ENCODE measurements at regions of chr16 and their contacts with region 1.

Region 1: DNA sequence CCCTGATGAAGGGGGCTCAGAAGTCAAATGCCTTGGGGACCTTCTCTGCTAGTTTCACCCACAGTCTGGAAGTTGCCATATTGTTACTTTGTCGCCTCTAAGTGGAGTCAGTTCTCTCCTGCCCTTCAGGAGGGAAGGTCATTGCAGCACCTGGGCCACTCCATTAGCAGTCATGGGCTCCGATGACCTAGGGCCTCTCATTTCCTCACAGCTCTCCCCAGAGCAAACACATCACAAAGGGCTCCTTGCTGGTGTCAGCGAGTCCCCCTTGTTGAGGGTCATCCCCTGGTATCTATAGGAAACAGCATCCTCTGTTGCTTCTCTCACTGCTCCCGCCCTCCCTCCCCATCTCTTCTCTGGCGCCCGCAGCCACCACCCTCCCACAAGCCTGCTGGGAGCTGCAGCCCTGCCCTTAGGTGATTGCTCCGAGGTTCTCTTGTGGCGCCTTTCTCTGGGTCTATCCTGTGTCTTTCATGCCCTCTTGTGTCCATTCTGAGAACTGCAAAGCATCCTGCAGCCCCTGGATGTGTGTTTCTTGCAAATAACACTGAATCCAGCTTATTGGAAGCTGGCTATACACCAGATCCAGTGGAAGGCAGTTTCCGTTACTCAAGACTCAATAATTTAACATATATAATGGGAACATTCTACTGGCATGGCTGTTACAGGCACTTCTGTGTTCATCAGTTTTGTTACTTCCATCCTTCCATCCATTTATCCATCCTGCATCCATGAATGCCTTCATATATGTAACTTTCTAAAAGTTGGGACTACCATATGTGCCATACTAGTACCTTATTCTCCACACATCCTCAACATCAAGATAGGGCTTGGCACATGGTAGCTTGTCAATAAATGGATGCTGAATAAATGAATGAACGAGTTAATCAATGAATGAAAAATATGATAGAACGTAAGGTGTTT is 21.2 kb downstream of the PDILT start:
- DNase-seq: peak; percentile 74
- H3K4me3 ChIP-seq: no peak overlapping the region
- H3K27ac ChIP-seq: no peak overlapping the region
- H3K4me1 ChIP-seq: no peaks in the 10 kb centered on the region
- H3K27me3 ChIP-seq: peaks cover 7% of the 10 kb centered on the region
- CTCF ChIP-seq: peak; percentile 79

Region 2: DNA sequence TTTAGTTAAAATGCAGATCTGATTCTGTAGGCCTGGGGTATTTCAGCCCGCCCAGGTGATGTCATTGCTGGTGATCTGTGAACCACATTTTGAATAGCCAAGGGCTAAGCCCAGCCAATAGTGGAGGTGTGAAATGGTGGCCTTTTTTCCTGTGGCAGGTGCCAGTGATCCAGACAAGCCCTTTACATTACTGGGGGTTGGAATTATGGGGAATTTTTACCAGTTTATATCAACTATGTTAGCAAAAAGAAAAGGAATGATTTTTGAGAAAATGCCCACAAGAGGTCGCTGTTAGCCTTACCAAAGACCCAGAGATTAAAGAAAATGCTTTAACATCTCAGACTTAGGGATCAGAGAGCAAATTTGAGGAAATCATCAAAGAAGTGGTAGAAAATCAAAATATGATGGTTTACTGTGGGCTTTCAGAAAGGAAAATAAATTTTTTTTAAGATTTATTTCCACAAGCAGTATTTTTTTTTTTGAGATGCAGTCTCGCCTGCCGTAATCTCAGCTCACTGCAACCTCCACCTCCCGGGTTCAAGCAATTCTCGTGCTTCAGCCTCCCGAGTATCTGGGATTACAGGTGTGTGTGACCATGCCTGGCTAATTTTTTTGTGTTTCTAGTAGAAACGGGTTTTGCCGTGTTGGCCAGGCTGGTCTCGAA is 824.0 kb before region 1 on chr16:
- CTCF ChIA-PET with region 1: no interaction called
- POLR2A ChIA-PET with region 1: no interaction called
- intact Hi-C with region 1: loop called (anchors 10 kb)
- DNase-seq: peak; percentile 69
- H3K4me3 ChIP-seq: no peak overlapping the region
- H3K27ac ChIP-seq: no peak overlapping the region
- H3K4me1 ChIP-seq: no peaks in the 10 kb centered on the region
- H3K27me3 ChIP-seq: no peaks in the 10 kb centered on the region
- CTCF ChIP-seq: peak; percentile 80

Region 3: DNA sequence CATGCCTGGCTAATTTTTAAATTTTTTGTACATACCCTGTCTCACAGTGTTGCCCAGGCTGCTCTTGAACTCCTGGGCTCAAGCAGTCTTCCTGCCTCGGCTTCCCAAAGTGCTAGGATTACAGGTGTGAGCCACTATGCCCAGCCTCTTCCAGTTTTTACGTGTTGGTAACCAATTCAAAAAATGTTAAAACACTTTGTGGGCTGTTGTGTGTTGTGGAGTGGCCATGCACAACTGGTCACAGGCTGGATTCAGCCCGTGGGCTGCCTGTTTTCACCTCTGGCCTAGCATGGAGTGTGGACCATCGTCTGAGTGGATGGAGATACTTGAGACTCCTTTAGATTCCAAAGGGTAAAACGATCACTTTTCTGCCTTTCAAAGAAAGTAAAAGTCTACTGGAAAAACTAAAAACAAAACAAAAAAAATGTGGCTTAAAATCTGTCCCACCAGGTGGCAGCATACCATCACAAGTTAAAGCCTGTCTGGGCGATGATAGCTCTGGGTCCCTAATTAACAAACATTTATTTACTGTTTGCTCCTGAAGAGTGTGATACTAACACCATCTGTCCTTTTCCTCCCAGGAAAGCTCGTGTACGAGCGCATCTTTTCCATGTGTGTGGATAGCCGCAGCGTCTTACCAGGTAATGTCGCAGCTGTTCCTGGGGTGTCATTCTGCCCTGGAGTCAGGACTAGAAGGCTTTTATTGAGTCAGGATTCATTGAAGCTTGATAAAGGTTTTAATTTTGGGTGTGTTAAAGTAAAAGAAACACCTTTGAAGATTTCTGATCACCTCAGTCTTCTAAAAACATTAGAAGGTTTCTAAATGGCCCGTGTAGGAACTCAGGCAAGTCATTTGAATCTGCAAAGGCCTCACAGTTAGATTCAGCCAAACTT is 782.0 kb before region 1 on chr16:
- CTCF ChIA-PET with region 1: no interaction called
- POLR2A ChIA-PET with region 1: no interaction called
- intact Hi-C with region 1: loop called (anchors 10 kb)
- DNase-seq: peak; percentile 44
- H3K4me3 ChIP-seq: no peak overlapping the region
- H3K27ac ChIP-seq: no peak overlapping the region
- H3K4me1 ChIP-seq: no peaks in the 10 kb centered on the region
- H3K27me3 ChIP-seq: no peaks in the 10 kb centered on the region
- CTCF ChIP-seq: peak; percentile 72

Region 4: DNA sequence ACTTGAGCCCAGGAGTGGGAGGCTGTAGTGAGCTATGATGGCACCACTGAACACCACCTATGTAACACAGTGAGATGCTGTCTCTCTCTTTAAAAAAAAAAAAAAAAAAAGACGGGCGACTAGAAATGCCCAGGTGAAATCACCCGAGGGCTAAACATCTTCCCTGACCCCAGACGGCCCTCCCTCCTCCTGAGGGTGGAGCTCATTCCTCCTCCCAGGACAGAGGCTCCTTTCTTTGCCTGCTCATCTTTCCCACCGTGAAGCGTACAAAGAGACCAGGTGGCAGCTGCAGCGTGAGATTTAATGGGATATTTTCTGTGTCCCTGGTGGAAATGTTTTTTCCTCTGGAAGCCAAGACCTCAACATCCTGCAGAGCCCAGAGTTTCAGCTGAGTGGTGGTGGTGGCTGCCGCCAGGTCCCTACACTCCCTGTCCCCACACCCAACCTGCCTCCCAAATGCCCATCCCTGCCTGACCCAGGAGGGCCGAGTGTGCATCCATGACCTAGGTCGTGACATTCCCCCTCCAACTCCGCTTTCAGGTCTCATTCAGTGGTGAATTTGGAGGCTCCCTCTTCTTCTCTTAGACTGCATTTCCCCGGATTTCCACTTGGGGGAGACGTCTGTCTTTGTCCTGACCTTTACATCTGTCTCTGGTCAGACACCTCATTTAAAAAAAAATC is 484.3 kb before region 1 on chr16:
- CTCF ChIA-PET with region 1: interaction called, 10 read pairs
- POLR2A ChIA-PET with region 1: no interaction called
- intact Hi-C with region 1: no loop called
- DNase-seq: peak; percentile 64
- H3K4me3 ChIP-seq: no peak overlapping the region
- H3K27ac ChIP-seq: no peak overlapping the region
- H3K4me1 ChIP-seq: no peaks in the 10 kb centered on the region
- H3K27me3 ChIP-seq: no peaks in the 10 kb centered on the region
- CTCF ChIP-seq: peak; percentile 82

Region 5: DNA sequence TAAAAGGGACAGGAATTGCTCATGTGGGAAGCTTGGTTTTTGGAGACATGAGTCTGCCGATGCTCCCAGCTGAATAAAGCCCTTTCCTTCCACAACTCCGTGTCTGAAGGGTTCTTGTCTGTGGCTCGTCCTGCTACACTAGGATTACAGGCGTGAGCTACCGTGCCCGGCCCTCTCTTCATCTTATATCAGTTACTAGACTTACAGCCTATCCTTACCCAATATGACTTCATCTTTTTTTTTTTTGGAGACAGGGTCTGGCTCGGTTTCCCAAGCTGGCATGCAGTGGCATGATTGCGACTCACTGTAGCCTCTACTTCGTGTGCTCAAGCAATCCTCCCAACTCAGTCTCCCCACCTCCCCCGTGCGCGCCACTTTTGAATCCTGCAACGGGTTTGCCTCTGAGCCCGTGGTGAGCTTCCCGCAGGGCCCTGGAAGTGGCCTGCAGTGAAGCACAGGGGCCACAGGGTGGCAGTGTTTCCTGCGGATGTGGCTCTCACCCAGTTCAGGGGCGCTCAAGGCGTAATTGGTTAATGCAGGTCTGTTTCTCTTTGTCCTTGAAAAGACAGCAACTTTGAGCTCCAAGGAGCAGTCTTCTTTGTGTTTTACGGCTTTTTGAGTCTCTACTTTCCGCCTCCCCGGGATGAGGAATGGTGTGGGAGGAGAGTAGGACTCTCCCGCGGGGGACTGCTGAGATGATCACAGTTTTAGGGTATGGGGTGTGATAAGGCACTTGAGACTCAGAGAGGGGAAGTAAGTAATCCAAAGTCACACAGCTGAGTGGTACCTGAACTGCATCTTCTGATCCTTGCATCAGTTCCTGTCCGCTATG is 476.0 kb before region 1 on chr16:
- CTCF ChIA-PET with region 1: interaction called, 43 read pairs
- POLR2A ChIA-PET with region 1: no interaction called
- intact Hi-C with region 1: loop called (anchors 2 kb)
- DNase-seq: peak; percentile 83
- H3K4me3 ChIP-seq: no peak overlapping the region
- H3K27ac ChIP-seq: no peak overlapping the region
- H3K4me1 ChIP-seq: no peaks in the 10 kb centered on the region
- H3K27me3 ChIP-seq: no peaks in the 10 kb centered on the region
- CTCF ChIP-seq: peak; percentile 98

Region 6: DNA sequence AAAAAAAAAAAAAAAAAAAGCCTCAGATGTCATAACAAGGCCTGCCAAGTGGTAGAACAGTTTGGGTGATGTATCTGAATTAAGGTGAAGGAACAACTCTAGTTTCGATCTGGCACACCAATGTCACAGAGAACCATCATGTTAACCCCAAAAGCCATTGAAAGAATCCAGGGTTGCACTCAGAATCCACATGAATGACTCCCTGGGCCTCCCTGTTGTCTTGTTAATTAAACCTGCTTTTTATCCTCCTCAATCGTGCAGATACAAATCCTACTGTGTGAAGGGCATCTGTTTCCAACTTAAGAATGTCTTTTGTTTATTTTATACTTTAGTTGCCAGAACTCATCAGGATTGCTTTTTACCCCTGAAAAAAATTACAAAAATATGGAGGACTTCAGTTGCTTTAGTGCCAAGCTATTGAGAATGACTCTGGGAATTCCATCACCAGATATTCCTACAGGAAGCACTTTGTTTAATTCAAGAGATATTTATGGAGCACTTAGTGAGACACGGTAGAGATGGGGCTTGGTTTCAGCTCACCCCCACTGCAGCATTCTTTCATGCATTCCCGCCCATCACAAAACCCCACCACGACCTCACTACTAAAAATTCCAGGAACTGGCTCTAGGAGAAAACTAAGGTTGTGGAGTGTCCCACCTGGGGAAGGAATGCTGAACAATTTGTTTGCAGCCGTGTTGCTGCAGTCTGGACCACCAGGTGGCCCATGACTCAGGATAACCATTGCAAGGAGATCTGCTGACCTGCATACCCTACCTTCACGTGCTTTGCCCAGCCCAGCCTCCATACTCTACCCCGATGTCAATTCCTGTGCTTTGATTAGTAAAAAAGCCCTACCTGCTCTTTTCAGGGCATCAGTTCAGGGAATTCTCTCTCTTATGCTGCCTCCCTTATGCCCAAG is 434.9 kb before region 1 on chr16:
- CTCF ChIA-PET with region 1: no interaction called
- POLR2A ChIA-PET with region 1: no interaction called
- intact Hi-C with region 1: no loop called
- DNase-seq: no peak
- H3K4me3 ChIP-seq: no peak overlapping the region
- H3K27ac ChIP-seq: no peak overlapping the region
- H3K4me1 ChIP-seq: no peaks in the 10 kb centered on the region
- H3K27me3 ChIP-seq: peaks cover 30% of the 10 kb centered on the region
- CTCF ChIP-seq: no peak